ENCODE measurements at regions of chr15 and their contacts with region 1.

Region 1: DNA sequence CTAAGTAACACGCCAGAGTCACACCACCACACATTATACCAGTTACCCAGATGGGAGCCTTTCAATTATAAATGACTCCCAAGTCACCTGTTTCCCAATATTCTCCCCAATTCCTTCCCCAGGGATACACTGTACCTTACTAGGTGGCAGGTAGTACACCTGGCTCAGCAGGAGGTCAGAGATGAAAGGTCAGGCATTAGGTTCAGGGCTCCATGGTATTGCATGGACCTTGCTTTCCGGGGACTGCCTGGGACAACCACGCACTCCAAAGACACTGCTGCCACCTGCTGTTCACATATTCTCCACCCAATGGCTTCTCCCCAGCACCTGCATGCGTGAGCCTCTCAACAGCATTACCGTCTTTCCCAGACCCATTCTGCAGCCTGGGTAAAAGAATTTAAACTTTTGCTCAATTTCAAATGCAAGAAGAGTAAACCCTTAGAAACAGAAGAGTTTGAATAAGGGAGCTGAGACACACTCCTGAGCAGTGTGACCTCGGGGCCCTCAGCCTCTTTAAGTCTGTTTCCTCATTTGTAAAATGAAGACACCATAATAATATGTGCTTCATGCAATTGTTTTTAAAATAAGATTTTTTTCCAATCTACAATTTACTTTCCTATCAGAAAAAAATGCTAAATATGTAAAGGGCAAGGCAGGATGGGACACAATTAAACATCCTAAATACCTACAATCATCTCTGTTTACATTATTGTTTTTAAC is 28.0 kb upstream of the LACTB start:
- DNase-seq: peak; percentile 51 to 83 (median 65)
- ATAC-seq: peak; percentile 87
- H3K4me3 ChIP-seq: no peak overlapping the region
- H3K4me3 Mint-ChIP-seq: no peak overlapping the region
- H3K27ac ChIP-seq: no peak overlapping the region
- H3K27ac Mint-ChIP-seq: no peak overlapping the region
- H3K4me1 ChIP-seq: no peaks in the 10 kb centered on the region
- H3K4me1 Mint-ChIP-seq: no peaks in the 10 kb centered on the region
- H3K27me3 ChIP-seq: no peaks in the 10 kb centered on the region
- H3K27me3 Mint-ChIP-seq: no peaks in the 10 kb centered on the region
- CTCF ChIP-seq: peak; percentile 81

Region 2: GRCh38 chr15:61318301-61318700 is 1775.3 kb before region 1 on chr15:
- CTCF ChIA-PET with region 1: no interaction called
- POLR2A ChIA-PET with region 1: no interaction called
- intact Hi-C with region 1: no loop called
- DNase-seq: no peak
- ATAC-seq: no peak
- H3K4me3 ChIP-seq: no peak overlapping the region
- H3K4me3 Mint-ChIP-seq: no peak overlapping the region
- H3K27ac ChIP-seq: no peak overlapping the region
- H3K27ac Mint-ChIP-seq: no peak overlapping the region
- H3K4me1 ChIP-seq: no peaks in the 10 kb centered on the region
- H3K4me1 Mint-ChIP-seq: no peaks in the 10 kb centered on the region
- H3K27me3 ChIP-seq: peaks cover 0 to 3% of the 10 kb centered on the region in 2 experiments
- H3K27me3 Mint-ChIP-seq: peaks cover 6% of the 10 kb centered on the region
- CTCF ChIP-seq: no peak

Region 3: DNA sequence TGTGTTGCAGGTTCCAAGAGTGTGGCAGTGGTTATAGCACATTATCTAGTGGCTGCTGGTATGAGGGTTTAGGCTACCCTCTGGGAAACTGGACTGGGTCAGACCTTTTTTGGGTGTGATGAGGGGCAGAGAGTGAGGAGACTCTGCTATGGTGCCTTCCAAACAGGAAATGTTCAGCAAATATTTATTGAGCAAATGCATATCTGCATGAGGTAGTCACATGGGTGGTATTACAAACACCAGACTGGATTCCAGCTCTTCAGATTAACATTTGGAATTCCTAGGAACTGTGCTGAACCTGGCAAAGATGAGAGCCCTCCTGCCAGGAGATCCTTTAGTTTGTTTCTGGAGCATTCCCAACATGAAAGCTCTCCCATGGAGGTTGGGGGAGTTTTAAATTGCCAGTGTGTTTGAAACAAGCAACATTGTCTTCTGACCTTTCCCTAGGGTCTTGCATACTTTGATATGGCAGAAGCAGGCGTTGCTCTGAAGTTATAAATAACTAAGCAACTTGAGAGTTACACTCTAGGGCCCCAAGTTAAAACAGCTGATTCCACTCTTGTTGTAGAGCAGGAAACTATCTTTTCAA is 587.3 kb before region 1 on chr15:
- CTCF ChIA-PET with region 1: no interaction called
- POLR2A ChIA-PET with region 1: no interaction called
- intact Hi-C with region 1: no loop called
- DNase-seq: no peak
- ATAC-seq: no peak
- H3K4me3 ChIP-seq: no peak overlapping the region
- H3K4me3 Mint-ChIP-seq: no peak overlapping the region
- H3K27ac ChIP-seq: no peak overlapping the region
- H3K27ac Mint-ChIP-seq: no peak overlapping the region
- H3K4me1 ChIP-seq: no peaks in the 10 kb centered on the region
- H3K4me1 Mint-ChIP-seq: no peaks in the 10 kb centered on the region
- H3K27me3 ChIP-seq: peaks cover 0 to 5% of the 10 kb centered on the region in 2 experiments
- H3K27me3 Mint-ChIP-seq: peaks cover 25% of the 10 kb centered on the region
- CTCF ChIP-seq: no peak

Region 4: DNA sequence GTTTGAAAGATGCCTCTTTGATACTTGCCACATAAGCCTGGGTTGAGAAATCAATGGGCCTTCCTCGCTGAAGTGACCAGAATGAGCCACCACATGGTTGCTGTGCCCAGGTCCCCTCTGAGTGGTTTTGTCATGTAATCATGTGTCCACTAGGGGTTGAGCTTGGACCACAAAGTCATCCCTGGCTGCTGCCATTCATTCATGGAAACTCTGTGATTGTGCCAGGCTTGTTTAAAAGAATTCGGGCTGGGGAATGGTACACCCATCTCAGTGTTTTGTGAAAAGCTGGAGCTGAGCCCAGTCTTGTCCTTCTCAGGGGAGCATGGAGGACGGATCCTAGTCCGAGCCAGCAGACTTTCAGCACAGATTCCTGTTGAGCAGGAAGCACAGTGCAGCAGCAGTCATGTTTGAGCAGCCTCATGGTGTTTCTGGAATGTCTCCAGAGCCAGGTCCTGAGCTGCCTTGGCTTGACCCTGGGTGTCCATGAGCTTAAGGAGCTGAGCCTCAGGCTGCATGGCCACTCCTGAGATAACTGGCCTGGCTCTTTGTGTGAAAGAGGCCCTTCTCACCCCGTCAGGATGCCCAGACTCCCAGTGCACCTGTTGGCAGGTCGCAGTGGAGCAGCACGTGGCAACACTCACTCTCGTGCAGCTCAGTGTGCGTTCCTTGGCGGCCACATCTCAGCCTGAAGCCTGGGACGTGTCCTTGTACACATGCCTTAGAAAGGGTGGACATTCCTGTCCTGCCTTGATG is 311.4 kb before region 1 on chr15:
- CTCF ChIA-PET with region 1: no interaction called
- POLR2A ChIA-PET with region 1: no interaction called
- intact Hi-C with region 1: loop called in 1 of 2 experiments (anchors 5 kb)
- DNase-seq: peak in 3 of 14 experiments; percentile 7 to 33 (median 19)
- ATAC-seq: no peak
- H3K4me3 ChIP-seq: no peak overlapping the region
- H3K4me3 Mint-ChIP-seq: no peak overlapping the region
- H3K27ac ChIP-seq: no peak overlapping the region
- H3K27ac Mint-ChIP-seq: no peak overlapping the region
- H3K4me1 ChIP-seq: no peaks in the 10 kb centered on the region
- H3K4me1 Mint-ChIP-seq: no peaks in the 10 kb centered on the region
- H3K27me3 ChIP-seq: no peaks in the 10 kb centered on the region
- H3K27me3 Mint-ChIP-seq: peaks cover 3% of the 10 kb centered on the region
- CTCF ChIP-seq: no peak

Region 5: DNA sequence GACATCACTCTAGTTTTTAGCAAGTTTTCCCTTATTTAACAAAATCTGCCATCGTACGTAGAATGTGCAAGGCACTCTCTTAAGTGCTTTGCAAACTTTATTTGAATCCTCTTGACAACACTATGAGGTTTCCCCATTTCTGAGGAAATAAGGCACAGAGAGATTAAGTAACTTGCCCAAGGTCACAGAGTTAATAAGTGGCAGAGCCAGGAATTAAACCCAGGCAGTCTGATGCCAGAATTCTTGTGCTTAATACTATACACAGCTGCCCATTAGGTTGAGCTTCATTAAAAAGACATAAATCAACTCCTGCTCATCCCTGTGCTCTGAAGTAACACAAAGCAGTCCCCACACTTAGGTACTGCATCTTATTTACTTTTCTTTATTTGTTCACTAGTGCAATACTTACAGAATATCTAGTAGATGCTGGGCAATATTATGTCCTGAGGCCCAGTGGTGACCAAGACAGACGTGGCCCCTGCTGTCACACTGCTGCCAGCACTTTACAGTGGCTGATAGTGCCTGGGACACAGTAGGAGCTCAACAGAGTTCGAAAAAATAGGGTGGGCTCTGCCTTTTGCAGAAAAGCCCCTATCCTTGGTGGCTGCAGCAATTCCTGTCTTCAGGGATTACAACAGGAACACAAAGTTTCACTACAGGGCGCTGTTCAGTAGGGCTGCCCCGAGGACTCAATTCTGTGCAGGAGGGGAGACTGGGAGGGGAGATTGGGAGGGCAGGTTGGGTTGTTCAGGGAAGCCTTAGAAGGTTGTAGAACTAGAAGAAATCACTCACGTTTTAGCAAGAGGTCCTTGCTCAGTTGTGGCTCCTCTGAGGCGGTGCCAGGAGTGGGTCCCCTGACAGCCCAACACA is 189.4 kb before region 1 on chr15:
- CTCF ChIA-PET with region 1: no interaction called
- POLR2A ChIA-PET with region 1: no interaction called
- intact Hi-C with region 1: loop called in 1 of 2 experiments (anchors 1 kb)
- DNase-seq: peak in 3 of 14 experiments; percentile 2 to 16 (median 13)
- ATAC-seq: no peak
- H3K4me3 ChIP-seq: no peak overlapping the region
- H3K4me3 Mint-ChIP-seq: no peak overlapping the region
- H3K27ac ChIP-seq: no peak overlapping the region
- H3K27ac Mint-ChIP-seq: no peak overlapping the region
- H3K4me1 ChIP-seq: no peaks in the 10 kb centered on the region
- H3K4me1 Mint-ChIP-seq: no peaks in the 10 kb centered on the region
- H3K27me3 ChIP-seq: no peaks in the 10 kb centered on the region
- H3K27me3 Mint-ChIP-seq: no peaks in the 10 kb centered on the region
- CTCF ChIP-seq: peak; percentile 69

Measured in CD4-positive, alpha-beta T cell (primary cell).